Aorta (tissue), 5 donors: ENCODE measurements at regions of chr11 and their contacts with region 1.

Region 1: GRCh38 chr11:30346068-30346688 is 23.3 kb downstream of the ARL14EP start:
- DNase-seq: no peak
- ATAC-seq: peak; percentile 65
- H3K4me3 ChIP-seq: no peak overlapping the region
- H3K27ac ChIP-seq: no peak overlapping the region
- H3K4me1 ChIP-seq: no peaks in the 10 kb centered on the region
- H3K27me3 ChIP-seq: no peaks in the 10 kb centered on the region

Region 2: GRCh38 chr11:30586251-30587144 is 240.3 kb after region 1 on chr11 and contains the start of gene MPPED2:
- intact Hi-C with region 1: loop called (anchors 5 to 10 kb)
- DNase-seq: peak; percentile 72 to 83
- ATAC-seq: peak; percentile 65
- H3K4me3 ChIP-seq: peak within 1 kb of the TSS; percentile 91 to 94
- H3K27ac ChIP-seq: peak within 1 kb of the TSS; percentile 78 to 90
- H3K4me1 ChIP-seq: no peaks in the 10 kb centered on the region
- H3K27me3 ChIP-seq: no peaks in the 10 kb centered on the region
- total RNA-seq, gene MPPED2: 7.5 to 20.4 TPM

Region 3: GRCh38 chr11:30594646-30595411 is 248.7 kb after region 1 on chr11:
- intact Hi-C with region 1: loop called in 1 of 2 experiments (anchors 10 kb)
- DNase-seq: no peak
- ATAC-seq: no peak
- H3K4me3 ChIP-seq: peak overlapping the region; percentile 22 to 48
- H3K27ac ChIP-seq: peak overlapping the region in 1 of 2 donors; percentile 48
- H3K4me1 ChIP-seq: peaks cover 0 to 4% of the 10 kb centered on the region in 2 donors
- H3K27me3 ChIP-seq: no peaks in the 10 kb centered on the region

Region 4: DNA sequence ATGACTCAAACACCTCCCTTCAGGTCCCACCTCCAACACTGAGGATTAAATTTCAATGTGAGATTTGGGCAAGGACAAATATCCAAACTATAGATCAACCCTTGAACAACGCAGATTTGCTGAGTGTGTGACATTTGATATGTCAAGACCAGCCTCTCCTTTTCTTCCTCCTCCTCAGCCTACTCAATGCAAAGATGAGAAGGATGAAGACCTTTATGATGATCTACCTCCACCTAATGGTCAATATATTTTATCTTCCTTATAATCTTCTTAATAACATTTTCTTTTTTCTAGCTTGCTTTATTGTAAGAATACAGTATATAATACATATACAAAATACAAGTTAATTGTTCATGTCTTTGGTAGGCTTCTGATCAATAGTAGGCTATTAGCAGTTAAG is 307.4 kb after region 1 on chr11:
- intact Hi-C with region 1: loop called in 1 of 2 experiments (anchors 2 kb)
- DNase-seq: no peak
- ATAC-seq: no peak
- H3K4me3 ChIP-seq: no peak overlapping the region
- H3K27ac ChIP-seq: no peak overlapping the region
- H3K4me1 ChIP-seq: no peaks in the 10 kb centered on the region
- H3K27me3 ChIP-seq: no peaks in the 10 kb centered on the region

Region 5: DNA sequence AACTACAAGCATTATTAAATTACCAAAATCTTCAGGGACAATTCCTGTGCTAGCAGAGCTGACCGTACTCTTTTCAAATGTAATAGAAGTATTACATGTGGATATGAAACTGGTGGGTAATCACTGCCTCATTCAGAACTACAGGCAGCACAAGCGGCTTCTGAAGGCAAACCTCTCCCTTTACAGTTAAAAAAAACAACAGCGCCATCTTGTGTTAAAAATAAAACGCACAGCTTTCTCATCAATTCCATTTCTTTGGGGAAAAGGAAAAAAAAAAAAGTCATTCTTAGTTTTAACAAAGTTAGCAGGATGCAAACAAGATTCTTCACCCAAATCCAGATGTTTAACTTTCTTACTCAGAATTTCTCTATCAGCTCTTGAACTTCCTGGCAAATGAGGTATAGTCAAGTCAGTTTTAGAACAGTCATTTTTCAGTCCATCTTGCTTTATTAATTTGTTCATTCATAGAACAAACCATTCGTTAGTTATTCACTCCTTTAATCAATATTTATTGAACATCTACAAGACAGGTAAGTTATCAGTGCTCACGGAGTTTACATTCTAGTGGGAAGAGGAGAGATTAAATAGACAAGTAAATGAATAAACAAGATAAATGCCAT is 571.8 kb after region 1 on chr11:
- intact Hi-C with region 1: loop called (anchors 5 kb)
- DNase-seq: no peak
- ATAC-seq: no peak
- H3K4me3 ChIP-seq: no peak overlapping the region
- H3K27ac ChIP-seq: no peak overlapping the region
- H3K4me1 ChIP-seq: no peaks in the 10 kb centered on the region
- H3K27me3 ChIP-seq: no peaks in the 10 kb centered on the region